ENCODE measurements at regions of chr6 and their contacts with region 1.

Region 1: GRCh38 chr6:170554013-170554795 is at the start of gene TBP:
- DNase-seq: peak; percentile 98
- H3K4me3 ChIP-seq: peak within 1 kb of the TSS; percentile 100
- H3K27ac ChIP-seq: peak within 1 kb of the TSS; percentile 81
- H3K4me1 ChIP-seq: peaks cover 38% of the 10 kb centered on the region
- CTCF ChIP-seq: no peak
- total RNA-seq, gene TBP: 22.4 and 29.2 TPM in 2 replicates

Region 2: DNA sequence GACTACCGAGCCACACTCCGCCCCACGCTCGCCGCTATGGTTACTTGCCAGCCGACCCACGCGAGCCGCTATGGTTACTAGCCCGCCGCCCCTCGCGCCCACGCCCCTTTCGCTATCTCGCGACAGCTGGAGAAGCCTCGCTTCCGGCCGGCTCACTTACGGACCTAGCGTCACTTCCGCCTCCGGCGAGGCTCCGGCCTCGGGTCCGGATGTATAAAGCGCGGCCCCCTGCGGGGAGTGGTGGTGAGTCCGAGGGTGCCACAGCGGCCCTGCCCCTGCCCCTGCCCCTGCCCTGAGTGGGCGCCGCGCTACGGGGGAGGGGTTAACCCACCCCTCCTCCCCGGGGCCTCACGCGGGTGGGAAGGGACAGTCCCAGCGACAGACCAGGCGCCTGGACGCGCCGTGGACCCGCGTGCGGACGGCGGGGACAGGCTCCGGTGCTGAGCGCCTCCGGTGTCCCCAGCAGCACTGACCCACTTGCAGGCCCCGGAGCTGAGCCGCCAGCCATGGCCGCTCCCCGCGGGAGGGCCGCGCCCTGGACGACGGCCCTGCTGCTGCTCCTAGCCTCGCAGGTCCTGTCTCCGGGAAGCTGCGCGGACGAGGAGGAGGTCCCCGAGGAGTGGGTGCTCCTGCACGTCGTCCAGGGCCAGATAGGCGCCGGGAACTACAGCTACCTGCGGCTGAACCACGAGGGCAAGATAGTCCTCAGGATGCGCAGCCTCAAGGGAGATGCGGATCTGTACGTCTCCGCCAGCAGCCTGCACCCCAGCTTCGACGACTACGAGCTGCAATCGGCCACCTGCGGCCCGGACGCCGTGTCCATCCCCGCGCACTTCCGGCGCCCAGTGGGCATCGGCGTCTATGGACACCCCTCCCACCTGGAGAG is 852.0 kb before region 1 on chr6 and contains the starts of genes C6orf120 and WDR27:
- CTCF ChIA-PET with region 1: no interaction called
- POLR2A ChIA-PET with region 1: no interaction called
- intact Hi-C with region 1: loop called (anchors 5 kb)
- DNase-seq: peak; percentile 98
- H3K4me3 ChIP-seq: peak within 1 kb of the TSS; percentile 90
- H3K27ac ChIP-seq: peak within 1 kb of the TSS; percentile 63
- H3K4me1 ChIP-seq: peaks cover 50% of the 10 kb centered on the region
- CTCF ChIP-seq: 0 out of 2 replicates have a peak, but pooled peaks have one; percentile 24
- total RNA-seq, gene C6orf120: 30.3 and 31.0 TPM in 2 replicates
- total RNA-seq, gene WDR27: 69.5 and 77.2 TPM in 2 replicates

Region 3: DNA sequence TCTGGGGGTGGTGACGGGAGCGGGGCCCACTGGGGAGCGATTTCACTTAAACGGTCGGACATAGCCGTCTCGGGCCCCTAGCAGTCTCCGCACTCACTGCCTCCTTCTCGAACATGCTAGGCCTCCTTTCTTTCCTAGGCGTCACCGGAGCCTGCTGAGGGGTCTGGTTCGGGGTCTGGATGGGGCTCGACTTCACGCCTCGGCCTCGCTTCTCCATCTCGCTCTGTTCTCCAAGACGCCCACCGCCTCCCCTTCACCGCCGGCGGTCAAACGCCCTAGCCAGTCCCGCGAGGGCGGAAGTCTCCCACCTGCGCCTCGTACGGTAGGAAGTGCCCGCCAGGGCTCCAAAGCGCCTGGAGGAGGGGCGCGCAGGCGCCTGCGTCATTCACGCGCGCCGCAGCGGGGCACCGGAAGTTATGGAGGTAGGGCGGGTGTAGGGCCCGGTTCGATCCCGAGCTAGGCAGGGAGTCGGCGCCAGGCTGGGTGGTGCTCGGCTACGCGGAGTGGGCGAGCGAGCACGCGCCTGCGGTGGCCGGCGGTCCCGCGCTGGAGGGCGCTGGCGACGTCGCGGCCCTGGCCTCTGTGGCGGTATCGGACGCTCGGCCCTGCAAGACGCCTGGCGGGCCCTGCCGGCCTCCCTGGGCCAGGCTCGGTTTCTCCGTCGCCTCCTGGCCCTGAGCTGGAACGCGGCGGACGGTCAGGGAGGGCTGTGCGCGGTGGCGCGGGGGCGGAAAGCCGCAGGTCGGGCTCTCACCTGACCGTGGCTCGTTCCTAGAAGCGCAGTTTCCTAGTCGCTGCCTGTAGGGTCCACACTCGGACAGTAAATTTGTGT is 802.7 kb before region 1 on chr6 and contains the starts of genes DYNLT2 and ERMARD:
- CTCF ChIA-PET with region 1: interaction called, 3 read pairs
- POLR2A ChIA-PET with region 1: interaction called, 6 read pairs
- intact Hi-C with region 1: loop called (anchors 1 kb)
- DNase-seq: peak; percentile 95
- H3K4me3 ChIP-seq: peak within 1 kb of the TSS; percentile 81
- H3K27ac ChIP-seq: peak within 1 kb of the TSS; percentile 61
- H3K4me1 ChIP-seq: peaks cover 22% of the 10 kb centered on the region
- CTCF ChIP-seq: 0 out of 2 replicates have a peak, but pooled peaks have one; percentile 23
- total RNA-seq, gene DYNLT2: 7.7 and 10.9 TPM in 2 replicates
- total RNA-seq, gene ERMARD: 16.5 and 23.2 TPM in 2 replicates

Region 4: DNA sequence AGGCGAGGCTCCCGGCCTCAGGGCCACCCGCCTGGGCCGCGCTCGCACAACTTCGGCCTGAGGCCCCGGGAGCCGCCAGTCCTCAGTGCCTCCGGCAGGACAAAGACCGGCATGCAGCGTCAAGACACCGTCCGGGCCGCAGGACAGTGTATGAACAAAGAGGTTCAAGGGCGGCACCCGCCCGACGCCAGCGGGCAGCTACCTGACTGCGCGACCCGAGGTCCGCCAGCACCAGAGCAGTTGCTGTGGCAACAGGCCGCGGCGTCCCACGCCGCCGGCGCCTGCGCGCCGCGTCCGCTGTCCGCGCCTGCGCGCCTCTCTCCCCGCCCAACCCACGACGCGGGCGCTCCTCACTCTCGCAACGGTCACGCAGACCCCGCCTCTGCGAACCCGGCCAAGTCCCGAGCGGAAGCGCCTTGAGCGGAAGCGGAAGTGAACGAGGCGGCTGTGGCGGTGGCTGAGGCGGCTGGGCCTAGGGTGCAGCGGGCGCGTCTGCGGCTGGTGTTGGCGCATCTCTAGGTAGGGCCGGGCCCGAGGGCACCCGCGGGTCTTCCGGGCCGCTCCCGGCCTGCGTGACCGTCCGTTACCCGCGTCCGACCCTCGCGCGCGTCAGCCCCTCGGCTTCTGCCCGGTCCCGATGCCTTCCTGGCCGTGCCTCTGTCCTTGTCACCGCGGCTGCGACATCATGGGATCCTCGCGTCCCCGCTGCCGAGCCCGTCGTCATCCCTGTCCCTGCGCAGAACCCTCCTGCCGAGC is 247.7 kb before region 1 on chr6 and contains the start of gene FAM120B:
- CTCF ChIA-PET with region 1: no interaction called
- POLR2A ChIA-PET with region 1: no interaction called
- intact Hi-C with region 1: loop called (anchors 10 kb)
- DNase-seq: peak; percentile 96
- H3K4me3 ChIP-seq: peak within 1 kb of the TSS; percentile 93
- H3K27ac ChIP-seq: peak within 1 kb of the TSS; percentile 61
- H3K4me1 ChIP-seq: peaks cover 30% of the 10 kb centered on the region
- CTCF ChIP-seq: no peak
- total RNA-seq, gene FAM120B: 12.8 and 15.2 TPM in 2 replicates

Region 5: GRCh38 chr6:170542031-170542719 is 12.0 kb before region 1 on chr6:
- CTCF ChIA-PET with region 1: no interaction called
- POLR2A ChIA-PET with region 1: interaction called, 13 read pairs
- intact Hi-C with region 1: no loop called
- DNase-seq: no peak
- H3K4me3 ChIP-seq: no peak overlapping the region
- H3K27ac ChIP-seq: no peak overlapping the region
- H3K4me1 ChIP-seq: peaks cover 12% of the 10 kb centered on the region
- CTCF ChIP-seq: no peak

Region 6: GRCh38 chr6:170584181-170584953 is 30.2 kb after region 1 on chr6 and contains the start of gene PDCD2:
- CTCF ChIA-PET with region 1: no interaction called
- POLR2A ChIA-PET with region 1: interaction called, 14 read pairs
- intact Hi-C with region 1: loop called (anchors 1 kb)
- DNase-seq: peak; percentile 95
- H3K4me3 ChIP-seq: peak within 1 kb of the TSS; percentile 99
- H3K27ac ChIP-seq: peak within 1 kb of the TSS; percentile 87
- H3K4me1 ChIP-seq: peaks cover 22% of the 10 kb centered on the region
- CTCF ChIP-seq: no peak
- total RNA-seq, gene PDCD2: 92.8 and 98.5 TPM in 2 replicates

Measured in OCI-LY7 (cell line).